ENCODE measurements at regions of chr11 and their contacts with region 1.

Region 1: GRCh38 chr11:24543786-24544185 is 46.9 kb downstream of the LUZP2 start:
- DNase-seq: no peak
- H3K4me3 ChIP-seq: no peak overlapping the region
- H3K4me3 Mint-ChIP-seq: no peak overlapping the region
- H3K27ac Mint-ChIP-seq: no peak overlapping the region
- H3K4me1 ChIP-seq: no peaks in the 10 kb centered on the region
- H3K4me1 Mint-ChIP-seq: no peaks in the 10 kb centered on the region
- H3K27me3 ChIP-seq: no peaks in the 10 kb centered on the region
- H3K27me3 Mint-ChIP-seq: no peaks in the 10 kb centered on the region
- CTCF ChIP-seq: no peak

Region 2: DNA sequence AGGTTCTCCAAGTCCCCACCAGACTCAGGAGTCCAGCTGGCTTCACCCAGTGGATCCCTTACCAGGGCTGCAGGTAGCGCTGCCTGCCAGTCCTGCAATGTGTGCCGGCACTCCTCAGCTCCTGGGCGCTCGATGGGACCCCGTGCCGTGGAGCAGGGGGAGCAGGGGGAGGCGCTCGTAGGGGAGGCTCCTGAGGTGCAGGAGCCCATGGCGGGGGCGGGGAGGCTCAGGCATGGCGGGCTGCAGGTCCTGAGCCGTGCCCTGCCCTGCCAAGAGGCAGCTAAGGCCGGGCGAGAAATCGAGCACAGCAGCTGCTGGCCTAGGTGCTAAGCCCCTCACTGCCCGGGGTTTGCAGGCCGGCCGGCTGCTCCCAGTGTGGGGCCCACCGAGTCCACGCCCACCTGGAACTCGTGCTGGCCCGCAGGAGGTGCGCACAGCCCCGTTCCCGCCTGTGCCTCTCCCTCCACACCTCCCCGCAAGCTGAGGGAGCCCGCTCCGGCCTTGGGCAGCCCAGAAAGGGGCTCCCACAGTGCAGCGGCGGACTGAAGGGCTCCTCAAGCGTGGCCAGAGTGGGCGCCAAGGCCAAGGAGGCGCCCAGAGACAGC is 890.6 kb before region 1 on chr11:
- CTCF ChIA-PET with region 1: no interaction called
- POLR2A ChIA-PET with region 1: interaction called, 15 read pairs
- intact Hi-C with region 1: no loop called
- DNase-seq: no peak
- H3K4me3 ChIP-seq: no peak overlapping the region
- H3K4me3 Mint-ChIP-seq: no peak overlapping the region
- H3K27ac Mint-ChIP-seq: no peak overlapping the region
- H3K4me1 ChIP-seq: no peaks in the 10 kb centered on the region
- H3K4me1 Mint-ChIP-seq: no peaks in the 10 kb centered on the region
- H3K27me3 ChIP-seq: no peaks in the 10 kb centered on the region
- H3K27me3 Mint-ChIP-seq: no peaks in the 10 kb centered on the region
- CTCF ChIP-seq: no peak

Region 3: GRCh38 chr11:24609192-24610119 is 65.7 kb after region 1 on chr11:
- CTCF ChIA-PET with region 1: no interaction called
- POLR2A ChIA-PET with region 1: no interaction called
- intact Hi-C with region 1: no loop called
- DNase-seq: no peak
- H3K4me3 ChIP-seq: no peak overlapping the region
- H3K4me3 Mint-ChIP-seq: no peak overlapping the region
- H3K27ac Mint-ChIP-seq: no peak overlapping the region
- H3K4me1 ChIP-seq: no peaks in the 10 kb centered on the region
- H3K4me1 Mint-ChIP-seq: no peaks in the 10 kb centered on the region
- H3K27me3 ChIP-seq: no peaks in the 10 kb centered on the region
- H3K27me3 Mint-ChIP-seq: no peaks in the 10 kb centered on the region
- CTCF ChIP-seq: no peak